CD8-positive, alpha-beta T cell (primary cell): ENCODE measurements at regions of chr2 and their contacts with region 1.

Region 1: GRCh38 chr2:204177977-204178540 is 241.5 kb downstream of the ICOS start:
- DNase-seq: peak; percentile 36 to 80 (median 61)
- ATAC-seq: peak; percentile 48
- H3K4me3 ChIP-seq: no peak overlapping the region
- H3K4me3 Mint-ChIP-seq: no peak overlapping the region
- H3K27ac ChIP-seq: no peak overlapping the region
- H3K27ac Mint-ChIP-seq: no peak overlapping the region
- H3K4me1 ChIP-seq: no peaks in the 10 kb centered on the region
- H3K4me1 Mint-ChIP-seq: no peaks in the 10 kb centered on the region
- H3K27me3 ChIP-seq: peaks cover 0 to 3% of the 10 kb centered on the region in 2 experiments
- H3K27me3 Mint-ChIP-seq: peaks cover 6% of the 10 kb centered on the region
- CTCF ChIP-seq: peak; percentile 69

Region 2: GRCh38 chr2:203484266-203485112 is 693.6 kb before region 1 on chr2:
- CTCF ChIA-PET with region 1: no interaction called
- POLR2A ChIA-PET with region 1: no interaction called
- intact Hi-C with region 1: loop called in 1 of 2 experiments (anchors 5 kb)
- DNase-seq: peak; percentile 27 to 77 (median 48)
- ATAC-seq: peak; percentile 88
- H3K4me3 ChIP-seq: no peak overlapping the region
- H3K4me3 Mint-ChIP-seq: no peak overlapping the region
- H3K27ac ChIP-seq: no peak overlapping the region
- H3K27ac Mint-ChIP-seq: no peak overlapping the region
- H3K4me1 ChIP-seq: peaks cover 4% of the 10 kb centered on the region
- H3K4me1 Mint-ChIP-seq: peaks cover 7% of the 10 kb centered on the region
- H3K27me3 ChIP-seq: no peaks in the 10 kb centered on the region
- H3K27me3 Mint-ChIP-seq: no peaks in the 10 kb centered on the region
- CTCF ChIP-seq: peak; percentile 83

Region 3: GRCh38 chr2:203934041-203934492 is 244.0 kb before region 1 on chr2:
- CTCF ChIA-PET with region 1: interaction called, 11 read pairs
- POLR2A ChIA-PET with region 1: no interaction called
- intact Hi-C with region 1: loop called in 1 of 2 experiments (anchors 2 kb)
- DNase-seq: peak in 5 of 9 experiments; percentile 37 to 63 (median 46)
- ATAC-seq: peak; percentile 32
- H3K4me3 ChIP-seq: no peak overlapping the region
- H3K4me3 Mint-ChIP-seq: peak overlapping the region; percentile 70
- H3K27ac ChIP-seq: peak overlapping the region; percentile 17 to 74
- H3K27ac Mint-ChIP-seq: peak overlapping the region; percentile 93
- H3K4me1 ChIP-seq: peaks cover 39% of the 10 kb centered on the region
- H3K4me1 Mint-ChIP-seq: peaks cover 67% of the 10 kb centered on the region
- H3K27me3 ChIP-seq: no peaks in the 10 kb centered on the region
- H3K27me3 Mint-ChIP-seq: no peaks in the 10 kb centered on the region
- CTCF ChIP-seq: no peak

Region 4: GRCh38 chr2:204012072-204012653 is 165.9 kb before region 1 on chr2:
- CTCF ChIA-PET with region 1: no interaction called
- POLR2A ChIA-PET with region 1: no interaction called
- intact Hi-C with region 1: no loop called
- DNase-seq: no peak
- ATAC-seq: no peak
- H3K4me3 ChIP-seq: no peak overlapping the region
- H3K4me3 Mint-ChIP-seq: no peak overlapping the region
- H3K27ac ChIP-seq: no peak overlapping the region
- H3K27ac Mint-ChIP-seq: no peak overlapping the region
- H3K4me1 ChIP-seq: no peaks in the 10 kb centered on the region
- H3K4me1 Mint-ChIP-seq: peaks cover 21% of the 10 kb centered on the region
- H3K27me3 ChIP-seq: no peaks in the 10 kb centered on the region
- H3K27me3 Mint-ChIP-seq: no peaks in the 10 kb centered on the region
- CTCF ChIP-seq: no peak

Region 5: DNA sequence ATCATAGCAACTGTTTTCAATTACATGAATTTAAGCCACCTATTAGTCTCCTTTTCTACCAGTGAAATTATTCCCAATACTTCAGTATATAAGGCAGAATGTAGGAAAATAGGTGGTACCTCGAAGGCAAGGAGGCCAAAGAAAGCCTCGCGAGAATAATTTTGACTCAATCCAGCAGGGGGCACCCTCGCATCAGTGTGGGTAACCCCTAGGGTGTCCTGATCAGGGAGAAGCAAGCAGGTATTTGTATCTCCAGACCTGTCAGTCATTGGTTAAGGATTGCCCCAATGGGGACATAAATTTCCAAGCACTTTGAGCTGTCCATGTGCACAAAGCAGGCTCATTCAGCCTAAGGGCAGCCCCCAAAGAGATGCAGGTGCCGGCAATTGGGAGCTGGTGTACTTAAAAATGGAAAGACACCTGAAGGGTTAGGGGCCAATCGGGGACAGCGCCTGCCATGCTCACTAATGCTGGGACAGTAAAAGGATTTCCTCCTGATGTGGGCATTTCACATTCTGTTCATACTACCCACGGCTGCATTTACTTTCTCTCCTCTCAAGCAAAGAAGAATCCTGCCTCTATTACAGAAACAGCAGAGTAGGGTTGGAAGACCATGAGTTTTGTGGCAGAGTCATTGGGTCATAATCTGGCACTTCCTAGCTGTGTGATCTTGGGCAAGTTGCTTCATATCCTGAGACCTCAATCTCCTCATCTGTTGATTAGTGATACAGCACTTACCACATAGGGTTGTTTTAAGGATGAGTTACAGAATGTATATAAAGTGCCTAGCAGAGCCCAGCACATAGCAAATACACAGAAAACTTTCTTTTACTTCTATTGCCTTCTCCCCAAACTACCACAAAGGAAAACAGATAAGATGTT is 105.4 kb before region 1 on chr2:
- CTCF ChIA-PET with region 1: interaction called, 7 read pairs
- POLR2A ChIA-PET with region 1: no interaction called
- intact Hi-C with region 1: loop called in 1 of 2 experiments (anchors 1 kb)
- DNase-seq: peak; percentile 8 to 61 (median 50)
- ATAC-seq: peak; percentile 38
- H3K4me3 ChIP-seq: no peak overlapping the region
- H3K4me3 Mint-ChIP-seq: no peak overlapping the region
- H3K27ac ChIP-seq: no peak overlapping the region
- H3K27ac Mint-ChIP-seq: no peak overlapping the region
- H3K4me1 ChIP-seq: no peaks in the 10 kb centered on the region
- H3K4me1 Mint-ChIP-seq: no peaks in the 10 kb centered on the region
- H3K27me3 ChIP-seq: no peaks in the 10 kb centered on the region
- H3K27me3 Mint-ChIP-seq: no peaks in the 10 kb centered on the region
- CTCF ChIP-seq: peak; percentile 37

Region 6: GRCh38 chr2:204135752-204136151 is 42.3 kb before region 1 on chr2:
- CTCF ChIA-PET with region 1: interaction called, 26 read pairs
- POLR2A ChIA-PET with region 1: no interaction called
- intact Hi-C with region 1: no loop called
- DNase-seq: no peak
- ATAC-seq: no peak
- H3K4me3 ChIP-seq: no peak overlapping the region
- H3K4me3 Mint-ChIP-seq: no peak overlapping the region
- H3K27ac ChIP-seq: no peak overlapping the region
- H3K27ac Mint-ChIP-seq: no peak overlapping the region
- H3K4me1 ChIP-seq: no peaks in the 10 kb centered on the region
- H3K4me1 Mint-ChIP-seq: no peaks in the 10 kb centered on the region
- H3K27me3 ChIP-seq: no peaks in the 10 kb centered on the region
- H3K27me3 Mint-ChIP-seq: no peaks in the 10 kb centered on the region
- CTCF ChIP-seq: no peak

Region 7: DNA sequence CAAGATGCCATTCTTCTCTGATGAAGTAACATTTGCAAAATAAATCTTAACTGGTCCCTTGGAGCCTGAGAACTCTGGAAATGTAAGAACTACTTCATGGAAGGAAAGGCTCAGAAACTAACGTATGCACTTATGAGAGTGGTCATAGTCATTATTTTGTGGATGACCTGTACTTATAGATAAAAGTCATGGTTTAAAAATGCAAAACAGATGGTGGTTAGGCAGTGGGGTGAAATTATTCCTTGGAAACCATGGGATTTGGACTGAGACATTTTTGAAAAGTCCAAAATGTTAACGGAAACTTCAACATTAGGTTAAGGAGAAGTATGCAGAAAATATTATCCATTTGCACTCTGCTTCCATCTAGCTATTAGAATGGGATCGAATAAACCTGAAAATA is 18.5 kb before region 1 on chr2:
- CTCF ChIA-PET with region 1: interaction called, 31 read pairs
- POLR2A ChIA-PET with region 1: interaction called, 3 read pairs
- intact Hi-C with region 1: no loop called
- DNase-seq: no peak
- ATAC-seq: no peak
- H3K4me3 ChIP-seq: no peak overlapping the region
- H3K4me3 Mint-ChIP-seq: no peak overlapping the region
- H3K27ac ChIP-seq: no peak overlapping the region
- H3K27ac Mint-ChIP-seq: no peak overlapping the region
- H3K4me1 ChIP-seq: no peaks in the 10 kb centered on the region
- H3K4me1 Mint-ChIP-seq: no peaks in the 10 kb centered on the region
- H3K27me3 ChIP-seq: no peaks in the 10 kb centered on the region
- H3K27me3 Mint-ChIP-seq: peaks cover 12% of the 10 kb centered on the region
- CTCF ChIP-seq: no peak

Region 8: GRCh38 chr2:204265681-204266181 is 87.7 kb after region 1 on chr2:
- CTCF ChIA-PET with region 1: no interaction called
- POLR2A ChIA-PET with region 1: no interaction called
- intact Hi-C with region 1: no loop called
- DNase-seq: no peak
- ATAC-seq: no peak
- H3K4me3 ChIP-seq: no peak overlapping the region
- H3K4me3 Mint-ChIP-seq: no peak overlapping the region
- H3K27ac ChIP-seq: no peak overlapping the region
- H3K27ac Mint-ChIP-seq: no peak overlapping the region
- H3K4me1 ChIP-seq: no peaks in the 10 kb centered on the region
- H3K4me1 Mint-ChIP-seq: no peaks in the 10 kb centered on the region
- H3K27me3 ChIP-seq: peaks cover 0 to 2% of the 10 kb centered on the region in 2 experiments
- H3K27me3 Mint-ChIP-seq: peaks cover 38% of the 10 kb centered on the region
- CTCF ChIP-seq: no peak

Region 9: GRCh38 chr2:204483608-204484081 is 305.6 kb after region 1 on chr2:
- CTCF ChIA-PET with region 1: no interaction called
- POLR2A ChIA-PET with region 1: no interaction called
- intact Hi-C with region 1: no loop called
- DNase-seq: no peak
- ATAC-seq: no peak
- H3K4me3 ChIP-seq: no peak overlapping the region
- H3K4me3 Mint-ChIP-seq: no peak overlapping the region
- H3K27ac ChIP-seq: no peak overlapping the region
- H3K27ac Mint-ChIP-seq: no peak overlapping the region
- H3K4me1 ChIP-seq: no peaks in the 10 kb centered on the region
- H3K4me1 Mint-ChIP-seq: no peaks in the 10 kb centered on the region
- H3K27me3 ChIP-seq: peaks cover 0 to 2% of the 10 kb centered on the region in 2 experiments
- H3K27me3 Mint-ChIP-seq: peaks cover 2% of the 10 kb centered on the region
- CTCF ChIP-seq: no peak